WTC11 (cell line): ENCODE measurements at regions of chr5 and their contacts with region 1.

Region 1: GRCh38 chr5:76256116-76256889 is 146.8 kb upstream of the IQGAP2 start:
- DNase-seq: peak; percentile 59
- ATAC-seq: peak; percentile 98
- H3K4me3 Mint-ChIP-seq: no peak overlapping the region
- H3K27ac Mint-ChIP-seq: no peak overlapping the region
- H3K4me1 Mint-ChIP-seq: peaks cover 5% of the 10 kb centered on the region
- H3K27me3 Mint-ChIP-seq: no peaks in the 10 kb centered on the region
- CTCF ChIP-seq: 0 out of 2 replicates have a peak, but pooled peaks have one; percentile 34

Region 2: GRCh38 chr5:75885849-75886598 is 370.3 kb before region 1 on chr5:
- CTCF ChIA-PET with region 1: interaction called, 11 read pairs
- POLR2A ChIA-PET with region 1: no interaction called
- DNase-seq: peak; percentile 34
- ATAC-seq: peak; percentile 94
- H3K4me3 Mint-ChIP-seq: no peak overlapping the region
- H3K27ac Mint-ChIP-seq: 0 out of 2 replicates have a peak overlapping the region, but pooled peaks have one; percentile 2
- H3K4me1 Mint-ChIP-seq: 0 out of 2 replicates have a peak, but pooled peaks cover 4% of the 10 kb centered on the region
- H3K27me3 Mint-ChIP-seq: no peaks in the 10 kb centered on the region
- CTCF ChIP-seq: no peak

Region 3: DNA sequence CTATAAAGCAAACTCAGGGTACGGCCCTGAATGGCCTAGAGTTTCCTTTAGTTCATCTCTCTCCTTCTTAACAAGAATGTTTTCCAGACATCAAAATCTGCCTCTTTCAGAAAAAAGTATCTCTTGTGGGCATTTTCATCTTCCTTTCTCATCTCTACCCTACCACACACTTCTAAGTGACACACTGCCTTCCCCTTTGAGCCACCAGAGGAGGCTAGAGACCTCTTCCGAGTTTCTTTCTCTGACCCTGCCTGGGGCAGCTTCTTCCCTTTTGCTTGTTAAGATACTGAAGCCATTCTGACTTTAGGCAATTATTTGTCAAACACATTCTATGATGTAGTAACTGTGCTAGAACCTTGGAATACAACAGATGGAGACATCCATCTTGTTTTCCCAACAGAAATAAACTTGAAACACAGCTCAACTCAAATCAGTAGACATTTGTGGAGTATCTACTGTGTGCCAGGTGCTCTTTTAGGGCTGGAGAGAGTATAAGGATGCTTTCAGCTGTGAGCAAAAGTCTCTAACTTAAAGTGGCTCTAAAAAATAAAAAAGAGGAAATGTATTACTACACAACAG is 181.7 kb before region 1 on chr5:
- CTCF ChIA-PET with region 1: interaction called, 15 read pairs
- POLR2A ChIA-PET with region 1: no interaction called
- DNase-seq: peak; percentile 42
- ATAC-seq: peak; percentile 85
- H3K4me3 Mint-ChIP-seq: no peak overlapping the region
- H3K27ac Mint-ChIP-seq: no peak overlapping the region
- H3K4me1 Mint-ChIP-seq: no peaks in the 10 kb centered on the region
- H3K27me3 Mint-ChIP-seq: peaks cover 44% of the 10 kb centered on the region
- CTCF ChIP-seq: peak; percentile 63

Region 4: DNA sequence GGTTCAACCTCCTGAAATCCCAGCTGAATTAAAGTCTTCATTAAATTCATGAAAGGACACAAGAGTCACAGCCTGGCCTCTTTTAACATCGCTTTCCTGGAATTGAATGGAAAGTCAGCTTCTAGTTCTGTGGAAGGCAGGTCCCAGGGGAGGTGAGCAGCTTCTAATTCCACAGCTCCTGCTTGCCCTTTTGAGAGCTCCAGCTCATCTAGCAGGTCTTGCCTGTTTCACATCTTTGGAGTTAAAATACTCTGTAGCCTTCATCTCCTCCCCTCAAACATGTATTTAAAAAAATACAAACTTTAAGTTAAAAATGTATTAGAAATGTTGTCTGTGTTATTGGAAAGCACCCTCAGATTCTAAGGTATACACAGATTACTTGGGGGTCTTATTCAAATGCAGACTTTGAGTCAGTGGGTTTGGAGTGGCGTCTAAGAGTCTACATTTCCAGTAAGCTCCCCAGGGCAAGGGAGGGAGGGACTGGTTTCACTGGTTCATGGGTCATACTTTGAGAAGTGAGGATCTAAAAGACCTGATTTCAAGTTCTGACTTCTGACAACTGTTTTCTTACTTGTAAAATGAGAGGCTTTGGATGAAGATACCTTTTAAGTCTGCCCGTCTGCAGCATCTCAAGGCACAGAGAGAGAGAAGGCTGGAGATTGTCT is 64.3 kb before region 1 on chr5:
- CTCF ChIA-PET with region 1: no interaction called
- POLR2A ChIA-PET with region 1: no interaction called
- DNase-seq: no peak
- ATAC-seq: no peak
- H3K4me3 Mint-ChIP-seq: no peak overlapping the region
- H3K27ac Mint-ChIP-seq: no peak overlapping the region
- H3K4me1 Mint-ChIP-seq: peaks cover 29% of the 10 kb centered on the region
- H3K27me3 Mint-ChIP-seq: no peaks in the 10 kb centered on the region
- CTCF ChIP-seq: no peak

Region 5: GRCh38 chr5:76292620-76293322 is 36.5 kb after region 1 on chr5:
- CTCF ChIA-PET with region 1: no interaction called
- POLR2A ChIA-PET with region 1: no interaction called
- DNase-seq: no peak
- ATAC-seq: no peak
- H3K4me3 Mint-ChIP-seq: no peak overlapping the region
- H3K27ac Mint-ChIP-seq: no peak overlapping the region
- H3K4me1 Mint-ChIP-seq: peaks cover 29% of the 10 kb centered on the region
- H3K27me3 Mint-ChIP-seq: peaks cover 8% of the 10 kb centered on the region
- CTCF ChIP-seq: no peak

Region 6: GRCh38 chr5:76582230-76583162 is 326.2 kb after region 1 on chr5:
- CTCF ChIA-PET with region 1: interaction called, 10 read pairs
- POLR2A ChIA-PET with region 1: no interaction called
- DNase-seq: no peak
- ATAC-seq: peak; percentile 71
- H3K4me3 Mint-ChIP-seq: no peak overlapping the region; the same call in 1 of the 2 replicates
- H3K27ac Mint-ChIP-seq: peak overlapping the region; percentile 93; the same call in 1 of the 2 replicates
- H3K4me1 Mint-ChIP-seq: peaks cover 51% of the 10 kb centered on the region
- H3K27me3 Mint-ChIP-seq: no peaks in the 10 kb centered on the region
- CTCF ChIP-seq: no peak

Region 7: DNA sequence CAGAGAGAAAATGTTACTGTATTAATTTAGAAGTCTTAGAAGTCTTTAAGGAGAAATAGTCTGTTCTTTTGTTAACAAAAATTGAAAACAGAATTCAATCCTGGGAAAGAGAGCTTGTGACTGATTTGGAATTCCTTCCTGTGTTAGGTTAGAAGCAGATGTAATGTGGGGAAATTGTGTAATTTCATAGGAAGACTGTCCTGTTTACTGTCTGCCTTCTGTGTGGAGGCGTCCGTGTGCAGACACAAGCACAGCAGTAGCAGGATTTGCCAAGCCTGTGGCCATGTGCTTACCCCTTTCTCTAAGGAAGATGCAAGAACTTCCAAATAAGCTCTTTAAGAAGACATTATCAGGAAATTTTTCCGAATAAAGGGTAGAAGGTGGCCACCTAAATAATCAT is 422.9 kb after region 1 on chr5:
- CTCF ChIA-PET with region 1: no interaction called
- POLR2A ChIA-PET with region 1: no interaction called
- DNase-seq: no peak
- ATAC-seq: no peak
- H3K4me3 Mint-ChIP-seq: no peak overlapping the region
- H3K27ac Mint-ChIP-seq: no peak overlapping the region
- H3K4me1 Mint-ChIP-seq: no peaks in the 10 kb centered on the region
- H3K27me3 Mint-ChIP-seq: no peaks in the 10 kb centered on the region
- CTCF ChIP-seq: no peak